K562 (cell line): ENCODE measurements at regions of chr18 and their contacts with region 1.

Region 1: DNA sequence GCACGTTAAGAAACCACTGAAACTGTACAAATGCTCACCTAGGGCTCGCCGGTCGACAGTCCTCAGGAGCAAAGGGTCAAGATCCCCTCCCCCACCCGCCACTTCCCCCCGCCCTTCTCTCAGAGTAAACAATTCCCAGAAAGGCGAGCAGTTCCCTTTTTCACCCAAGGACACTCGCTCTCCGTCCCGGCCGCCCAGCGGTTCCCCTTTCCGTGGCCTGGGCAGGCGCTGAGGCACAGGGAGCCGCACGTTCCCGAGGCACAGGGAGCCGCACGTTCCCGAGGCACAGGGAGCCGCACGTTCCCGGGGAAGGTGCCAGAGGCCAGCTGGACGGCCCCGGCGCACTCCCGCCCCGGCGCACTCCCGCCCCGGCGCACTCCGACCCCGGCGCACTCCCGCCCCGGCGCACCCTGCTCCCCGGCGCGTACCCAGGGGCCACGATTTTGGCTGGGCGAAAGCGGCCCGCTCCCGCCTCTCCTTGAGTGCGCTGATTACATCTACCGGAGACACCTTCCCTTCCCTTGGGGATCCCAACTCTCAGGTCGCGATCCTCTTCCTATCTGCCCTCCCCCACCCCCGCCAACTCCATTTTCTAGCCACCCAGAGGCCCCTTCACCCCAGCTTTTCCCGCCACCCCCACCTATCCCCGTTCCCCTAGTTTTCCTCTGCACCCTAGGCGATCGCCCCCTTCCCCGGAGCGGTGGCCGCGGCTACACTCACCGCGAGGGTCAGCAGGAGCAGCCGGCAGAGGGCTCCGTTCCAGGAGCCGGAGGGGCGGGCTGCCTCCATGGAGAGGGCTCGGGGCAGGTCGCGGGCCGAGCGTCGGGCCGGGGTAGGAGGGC is 817 bp downstream of the DSC2 start:
- DNase-seq: peak; percentile 54 to 87 (median 70)
- ATAC-seq: peak; percentile 74
- H3K4me3 ChIP-seq: peak overlapping the region; percentile 72
- H3K27ac ChIP-seq: peak overlapping the region; percentile 78
- H3K4me1 ChIP-seq: peaks cover 14 to 28% of the 10 kb centered on the region in 2 experiments
- H3K27me3 ChIP-seq: no peaks in the 10 kb centered on the region
- CTCF ChIP-seq: peak in 2 of 3 experiments; percentile 16 to 33; a peak in 2 of 6 replicates
- EP300 ChIP-seq: peak; percentile 51; the same call in 1 of the 2 replicates
- POLR2A ChIP-seq: peak; percentile 77
- RAD21 ChIP-seq: no peak

Region 2: DNA sequence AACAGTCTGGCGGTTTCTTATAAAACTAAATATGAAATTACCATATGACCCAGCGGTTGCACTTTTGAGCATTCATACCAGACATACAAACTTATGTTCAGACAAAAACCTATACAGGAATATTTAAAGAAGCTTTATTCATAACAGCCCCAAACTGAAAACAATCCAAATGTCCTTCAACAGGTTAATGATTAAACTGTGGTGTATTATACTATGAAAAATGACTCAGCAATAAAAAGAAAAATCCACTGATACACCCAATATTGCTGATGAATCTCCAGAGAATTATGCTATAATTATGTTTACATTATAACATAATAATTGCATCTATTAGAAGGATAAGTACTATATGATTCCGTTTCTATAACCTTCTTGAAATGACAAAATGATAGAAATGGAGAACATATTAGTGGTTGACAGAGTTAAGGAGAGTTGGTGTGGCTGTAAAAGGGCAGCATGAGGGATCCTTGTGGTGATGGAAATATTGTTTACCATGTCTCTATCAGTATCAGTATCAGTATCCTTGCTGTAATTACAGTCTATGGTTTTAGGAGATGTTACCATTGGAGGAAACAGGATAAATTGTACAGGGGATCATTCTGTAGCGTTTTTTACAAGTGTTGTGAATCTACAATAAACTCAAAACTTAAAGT is 185.9 kb before region 1 on chr18:
- CTCF ChIA-PET with region 1: no interaction called
- POLR2A ChIA-PET with region 1: no interaction called
- in situ Hi-C with region 1: no loop called
- intact Hi-C with region 1: no loop called
- DNase-seq: no peak
- ATAC-seq: no peak
- H3K4me3 ChIP-seq: no peak overlapping the region
- H3K27ac ChIP-seq: no peak overlapping the region
- H3K4me1 ChIP-seq: no peaks in the 10 kb centered on the region
- H3K27me3 ChIP-seq: no peaks in the 10 kb centered on the region
- CTCF ChIP-seq: no peak
- EP300 ChIP-seq: no peak
- POLR2A ChIP-seq: no peak
- RAD21 ChIP-seq: no peak

Region 3: GRCh38 chr18:30999186-30999585 is 102.2 kb before region 1 on chr18:
- CTCF ChIA-PET with region 1: no interaction called
- POLR2A ChIA-PET with region 1: no interaction called
- in situ Hi-C with region 1: no loop called
- intact Hi-C with region 1: loop called (anchors 5 kb)
- DNase-seq: no peak
- ATAC-seq: no peak
- H3K4me3 ChIP-seq: no peak overlapping the region
- H3K27ac ChIP-seq: no peak overlapping the region
- H3K4me1 ChIP-seq: no peaks in the 10 kb centered on the region
- H3K27me3 ChIP-seq: no peaks in the 10 kb centered on the region; a peak in 1 of 5 replicates
- CTCF ChIP-seq: peak in 1 of 3 experiments; percentile 52; a peak in 2 of 6 replicates
- EP300 ChIP-seq: no peak
- POLR2A ChIP-seq: no peak
- RAD21 ChIP-seq: peak; percentile 51 to 53

Region 4: DNA sequence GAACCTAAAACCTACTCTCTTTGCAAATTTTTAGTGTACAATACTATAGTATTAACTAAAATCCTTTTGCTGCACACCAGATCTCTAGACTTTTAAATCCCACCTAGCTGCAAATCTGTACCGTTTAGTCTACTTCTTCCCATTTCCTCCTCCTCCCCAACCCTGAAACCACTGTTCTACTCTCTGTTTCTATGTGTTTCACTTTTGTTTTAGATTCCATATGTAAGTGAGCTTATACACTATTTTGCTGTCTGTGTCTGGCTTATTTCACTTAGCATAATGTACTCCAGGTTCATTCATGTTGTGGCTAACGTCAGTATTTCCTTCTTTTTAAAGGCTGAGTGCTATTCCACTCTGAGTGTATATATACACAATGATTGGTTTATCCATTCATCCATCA is 19.2 kb after region 1 on chr18:
- CTCF ChIA-PET with region 1: no interaction called
- POLR2A ChIA-PET with region 1: no interaction called
- in situ Hi-C with region 1: no loop called
- intact Hi-C with region 1: no loop called
- DNase-seq: no peak
- ATAC-seq: no peak
- H3K4me3 ChIP-seq: no peak overlapping the region
- H3K27ac ChIP-seq: no peak overlapping the region
- H3K4me1 ChIP-seq: no peaks in the 10 kb centered on the region; a peak in 1 of 5 replicates
- H3K27me3 ChIP-seq: no peaks in the 10 kb centered on the region; a peak in 1 of 5 replicates
- CTCF ChIP-seq: no peak
- EP300 ChIP-seq: no peak
- POLR2A ChIP-seq: no peak
- RAD21 ChIP-seq: no peak

Region 5: DNA sequence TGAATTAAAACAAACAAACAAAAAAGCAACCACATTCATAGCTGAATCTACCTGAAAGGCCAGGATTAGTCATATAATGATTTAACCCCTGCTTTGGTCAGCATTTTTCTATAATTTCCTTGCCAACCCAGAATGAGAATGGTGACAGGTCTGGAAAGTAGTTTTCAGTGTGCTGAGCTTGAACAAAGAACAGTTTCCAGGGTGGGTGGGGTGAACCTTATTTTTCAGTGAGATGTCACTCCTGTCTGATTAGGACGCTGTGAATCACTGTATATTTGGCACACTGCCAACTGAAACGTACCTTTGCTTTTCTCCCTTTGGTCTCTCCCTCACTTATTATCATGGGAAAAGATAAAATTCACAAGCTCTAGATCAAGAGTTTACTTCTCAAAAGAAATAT is 96.3 kb after region 1 on chr18:
- CTCF ChIA-PET with region 1: no interaction called
- POLR2A ChIA-PET with region 1: no interaction called
- in situ Hi-C with region 1: no loop called
- intact Hi-C with region 1: loop called (anchors 5 kb)
- DNase-seq: peak in 2 of 4 experiments; percentile 17 to 44
- ATAC-seq: peak; percentile 42; the same call in 1 of the 3 replicates
- H3K4me3 ChIP-seq: no peak overlapping the region
- H3K27ac ChIP-seq: no peak overlapping the region
- H3K4me1 ChIP-seq: no peaks in the 10 kb centered on the region; a peak in 1 of 5 replicates
- H3K27me3 ChIP-seq: no peaks in the 10 kb centered on the region
- CTCF ChIP-seq: no peak
- EP300 ChIP-seq: no peak
- POLR2A ChIP-seq: no peak
- RAD21 ChIP-seq: no peak; a peak in 1 of 4 replicates

Region 6: GRCh38 chr18:31343454-31343853 is 242.1 kb after region 1 on chr18:
- CTCF ChIA-PET with region 1: no interaction called
- POLR2A ChIA-PET with region 1: no interaction called
- in situ Hi-C with region 1: no loop called
- intact Hi-C with region 1: no loop called
- DNase-seq: no peak
- ATAC-seq: no peak
- H3K4me3 ChIP-seq: no peak overlapping the region
- H3K27ac ChIP-seq: no peak overlapping the region
- H3K4me1 ChIP-seq: no peaks in the 10 kb centered on the region
- H3K27me3 ChIP-seq: no peaks in the 10 kb centered on the region
- CTCF ChIP-seq: no peak
- EP300 ChIP-seq: no peak
- POLR2A ChIP-seq: no peak
- RAD21 ChIP-seq: no peak

Region 7: GRCh38 chr18:31497837-31498573 is 396.6 kb after region 1 on chr18 and contains the start of gene DSG2:
- CTCF ChIA-PET with region 1: no interaction called
- POLR2A ChIA-PET with region 1: no interaction called
- in situ Hi-C with region 1: no loop called
- intact Hi-C with region 1: loop called (anchors 2 kb)
- DNase-seq: peak; percentile 83 to 92 (median 89)
- ATAC-seq: peak; percentile 94
- H3K4me3 ChIP-seq: peak within 1 kb of the TSS; percentile 87
- H3K27ac ChIP-seq: peak within 1 kb of the TSS; percentile 80
- H3K4me1 ChIP-seq: peaks cover 10 to 13% of the 10 kb centered on the region in 2 experiments; a peak in 4 of 5 replicates
- H3K27me3 ChIP-seq: no peaks in the 10 kb centered on the region
- CTCF ChIP-seq: no peak
- EP300 ChIP-seq: no peak
- POLR2A ChIP-seq: peak; percentile 75
- RAD21 ChIP-seq: no peak
- polyA plus RNA-seq, gene DSG2: 16.9 to 22.6 TPM

Region 8: DNA sequence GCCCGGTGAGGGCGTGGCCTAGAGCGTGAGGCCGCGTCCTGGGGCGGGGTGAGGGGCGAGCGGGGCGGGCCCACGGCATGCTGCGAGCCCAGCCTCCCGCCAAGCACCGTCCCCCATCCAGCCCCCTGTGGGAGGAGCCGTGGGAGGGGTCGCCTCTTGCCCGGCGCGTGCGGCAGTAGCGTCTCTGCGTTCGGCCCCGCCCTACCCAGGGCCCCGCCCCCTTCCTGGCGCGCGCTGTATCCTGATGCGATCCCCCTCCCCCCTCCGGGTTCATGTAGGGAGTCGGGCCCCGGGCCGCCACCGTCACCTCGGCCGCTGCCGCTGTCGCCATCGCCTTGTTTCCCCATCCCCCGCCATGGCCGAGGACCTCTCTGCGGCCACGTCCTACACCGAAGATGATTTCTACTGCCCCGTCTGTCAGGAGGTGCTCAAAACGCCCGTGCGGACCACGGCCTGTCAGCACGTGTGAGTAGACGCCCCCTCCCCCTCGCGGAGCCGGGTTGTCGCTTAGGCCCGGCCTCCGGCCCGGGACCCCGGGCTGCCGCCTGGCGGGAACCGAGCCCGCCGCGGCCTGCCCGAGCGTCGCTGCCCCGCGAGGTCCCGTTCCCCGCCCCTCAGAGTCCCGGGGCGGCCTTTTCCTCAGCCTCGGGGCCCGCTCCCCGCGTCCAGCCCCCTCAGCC is 991.2 kb after region 1 on chr18:
- CTCF ChIA-PET with region 1: no interaction called
- POLR2A ChIA-PET with region 1: no interaction called
- in situ Hi-C with region 1: no loop called
- intact Hi-C with region 1: loop called (anchors 10 kb)
- DNase-seq: peak; percentile 98 to 99 (median 99)
- ATAC-seq: peak; percentile 93
- H3K4me3 ChIP-seq: peak overlapping the region; percentile 77
- H3K27ac ChIP-seq: peak overlapping the region; percentile 98
- H3K4me1 ChIP-seq: peaks cover 28 to 31% of the 10 kb centered on the region in 2 experiments; a peak in 4 of 5 replicates
- H3K27me3 ChIP-seq: no peaks in the 10 kb centered on the region
- CTCF ChIP-seq: no peak
- EP300 ChIP-seq: no peak
- POLR2A ChIP-seq: peak; percentile 77
- RAD21 ChIP-seq: no peak